Calu3 (cell line): ENCODE measurements at regions of chr20 and their contacts with region 1.

Region 1: DNA sequence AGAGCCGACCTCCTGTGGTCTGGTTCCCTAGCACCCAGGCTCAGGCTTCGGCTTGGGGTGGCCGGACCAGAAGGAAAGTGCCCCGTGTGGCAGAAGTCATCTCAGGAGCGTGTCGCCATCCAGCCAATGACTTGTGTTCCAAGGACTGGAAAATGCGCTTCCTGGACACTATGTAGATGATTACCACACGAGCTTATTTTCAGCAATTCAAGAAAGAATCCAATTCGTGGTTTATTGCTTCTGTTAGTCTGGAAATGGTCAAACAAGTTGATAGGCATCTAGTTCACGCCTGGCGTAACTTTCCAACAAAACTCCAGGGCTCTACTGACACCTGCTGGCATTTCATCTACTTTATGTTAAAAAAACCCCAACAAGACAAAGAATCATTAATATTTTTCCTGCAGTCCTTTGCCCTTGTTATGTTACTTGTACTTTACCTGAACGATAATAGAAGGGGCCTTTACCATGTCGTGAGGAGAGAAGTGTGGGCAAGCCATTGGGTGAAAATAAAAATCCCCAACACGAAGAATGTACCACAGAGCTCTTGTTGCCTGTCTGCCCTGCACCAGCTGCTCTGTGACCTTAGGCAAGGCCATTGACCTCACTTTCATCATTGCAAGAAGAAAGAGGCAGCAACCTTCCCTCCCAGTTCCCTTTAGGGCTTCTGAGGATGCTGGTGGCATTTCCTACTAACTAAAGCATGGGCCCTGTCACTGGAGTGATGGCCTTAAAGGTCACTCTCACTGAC is 154.7 kb upstream of the LAMP5 start:
- DNase-seq: peak; percentile 37
- H3K4me3 Mint-ChIP-seq: no peak overlapping the region
- H3K27ac Mint-ChIP-seq: no peak overlapping the region
- H3K4me1 Mint-ChIP-seq: no peaks in the 10 kb centered on the region
- H3K27me3 Mint-ChIP-seq: no peaks in the 10 kb centered on the region
- CTCF ChIP-seq: peak; percentile 40

Region 2: GRCh38 chr20:8756410-8756809 is 603.3 kb before region 1 on chr20:
- CTCF ChIA-PET with region 1: no interaction called
- intact Hi-C with region 1: loop called (anchors 10 kb)
- DNase-seq: no peak
- H3K4me3 Mint-ChIP-seq: no peak overlapping the region
- H3K27ac Mint-ChIP-seq: no peak overlapping the region
- H3K4me1 Mint-ChIP-seq: no peaks in the 10 kb centered on the region
- H3K27me3 Mint-ChIP-seq: no peaks in the 10 kb centered on the region
- CTCF ChIP-seq: no peak

Region 3: DNA sequence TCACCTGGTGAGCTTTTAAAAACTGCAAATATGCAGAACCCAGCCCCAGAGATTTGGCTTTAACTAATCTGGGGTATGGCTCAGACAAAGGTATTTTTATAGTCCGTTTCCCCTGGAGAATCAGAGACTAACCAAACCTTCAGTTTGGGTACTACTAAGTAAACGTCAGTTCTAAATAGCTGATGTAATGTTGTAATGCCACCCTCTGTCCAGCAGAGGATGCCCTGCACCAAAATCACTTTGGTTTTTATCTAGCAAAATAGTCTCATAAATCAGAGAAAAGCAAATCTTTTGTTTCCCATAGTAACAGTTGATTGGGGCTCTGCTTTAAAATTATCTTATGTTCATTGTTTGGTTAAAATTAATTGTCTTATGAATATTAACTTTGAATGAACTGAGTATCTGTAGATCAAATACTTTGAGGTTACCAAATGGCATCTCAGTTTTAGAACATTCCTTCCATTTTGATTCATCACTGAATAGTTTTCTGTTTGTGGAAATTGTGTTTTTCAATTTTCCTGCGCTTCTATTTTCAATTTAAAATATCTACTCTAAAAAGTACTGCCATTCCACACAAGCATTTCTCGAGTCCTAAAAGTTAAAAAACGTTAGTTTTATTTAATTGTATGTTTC is 569.2 kb before region 1 on chr20:
- CTCF ChIA-PET with region 1: no interaction called
- intact Hi-C with region 1: loop called (anchors 1 kb)
- DNase-seq: peak; percentile 27
- H3K4me3 Mint-ChIP-seq: no peak overlapping the region
- H3K27ac Mint-ChIP-seq: no peak overlapping the region
- H3K4me1 Mint-ChIP-seq: no peaks in the 10 kb centered on the region
- H3K27me3 Mint-ChIP-seq: no peaks in the 10 kb centered on the region
- CTCF ChIP-seq: peak; percentile 71

Region 4: GRCh38 chr20:8853805-8854338 is 505.9 kb before region 1 on chr20:
- CTCF ChIA-PET with region 1: interaction called, 4 read pairs
- intact Hi-C with region 1: loop called (anchors 5 kb)
- DNase-seq: peak; percentile 18
- H3K4me3 Mint-ChIP-seq: no peak overlapping the region
- H3K27ac Mint-ChIP-seq: no peak overlapping the region
- H3K4me1 Mint-ChIP-seq: no peaks in the 10 kb centered on the region
- H3K27me3 Mint-ChIP-seq: no peaks in the 10 kb centered on the region
- CTCF ChIP-seq: peak; percentile 39

Region 5: DNA sequence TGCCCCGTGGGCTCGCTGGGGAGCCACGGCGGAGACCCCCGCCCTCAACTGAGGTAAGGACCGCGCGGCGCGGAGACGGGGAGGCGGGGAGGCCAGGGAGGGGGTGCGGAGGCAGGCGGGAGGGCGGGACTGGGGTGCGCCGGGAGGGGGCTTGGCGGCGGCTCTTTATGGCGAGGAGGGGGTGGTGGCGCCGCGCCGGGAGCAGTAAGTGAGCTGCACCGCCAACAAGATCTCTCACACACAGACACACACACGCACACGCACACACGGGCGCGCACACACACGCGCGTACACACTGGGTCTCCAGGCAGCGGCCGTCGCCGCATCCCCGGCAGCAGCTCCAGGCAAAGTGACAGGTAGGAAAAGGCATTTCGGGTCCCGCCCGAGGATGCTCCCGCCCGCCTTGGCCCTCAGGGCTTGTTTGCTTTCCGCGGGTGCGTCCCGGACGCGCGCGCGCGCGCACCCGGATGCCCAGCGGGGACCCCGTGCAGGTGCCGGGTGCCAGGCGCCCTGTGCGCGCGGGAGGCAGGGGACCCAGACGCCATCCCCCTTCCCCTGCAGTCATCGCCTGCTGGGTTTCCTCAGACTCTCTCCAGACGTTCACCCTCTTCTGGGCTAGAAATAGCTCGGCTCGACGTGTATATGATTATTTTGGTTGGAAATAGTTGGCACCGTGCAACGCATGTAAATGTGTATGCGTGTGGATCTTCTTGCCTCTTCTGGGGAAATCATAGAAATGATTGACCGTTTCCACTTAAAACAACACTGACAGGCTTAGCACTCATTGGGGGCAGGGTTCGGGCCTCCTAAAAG is 290.7 kb before region 1 on chr20 and contains the start of gene PLCB4:
- CTCF ChIA-PET with region 1: interaction called, 4 read pairs
- intact Hi-C with region 1: loop called (anchors 10 kb)
- DNase-seq: peak; percentile 51
- H3K4me3 Mint-ChIP-seq: peak within 1 kb of the TSS; percentile 89
- H3K27ac Mint-ChIP-seq: peak within 1 kb of the TSS; percentile 85
- H3K4me1 Mint-ChIP-seq: peaks cover 25% of the 10 kb centered on the region
- H3K27me3 Mint-ChIP-seq: no peaks in the 10 kb centered on the region
- CTCF ChIP-seq: no peak
- total RNA-seq, gene PLCB4: 9.9 and 12.9 TPM in 2 replicates

Region 6: DNA sequence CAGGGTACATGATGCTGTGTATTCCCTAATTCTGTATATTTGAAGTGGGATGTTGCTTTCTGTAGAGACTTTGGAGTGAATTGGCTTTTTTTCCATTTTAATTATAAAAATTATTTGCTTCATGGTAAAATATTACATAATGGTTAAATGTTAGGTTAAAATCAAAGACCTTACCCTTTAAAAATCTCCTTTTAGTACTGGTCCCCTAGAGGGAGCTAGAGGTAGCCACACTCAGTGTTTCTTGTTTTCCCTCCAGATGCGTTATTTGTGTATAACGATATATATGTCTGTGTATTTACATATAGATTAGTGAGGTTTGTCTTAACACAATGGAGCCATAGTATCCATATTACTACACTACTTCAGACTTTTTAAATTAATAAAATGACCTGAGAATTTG is 144.2 kb before region 1 on chr20:
- CTCF ChIA-PET with region 1: no interaction called
- intact Hi-C with region 1: loop called (anchors 10 kb)
- DNase-seq: no peak
- H3K4me3 Mint-ChIP-seq: no peak overlapping the region
- H3K27ac Mint-ChIP-seq: no peak overlapping the region
- H3K4me1 Mint-ChIP-seq: no peaks in the 10 kb centered on the region
- H3K27me3 Mint-ChIP-seq: no peaks in the 10 kb centered on the region
- CTCF ChIP-seq: no peak

Region 7: DNA sequence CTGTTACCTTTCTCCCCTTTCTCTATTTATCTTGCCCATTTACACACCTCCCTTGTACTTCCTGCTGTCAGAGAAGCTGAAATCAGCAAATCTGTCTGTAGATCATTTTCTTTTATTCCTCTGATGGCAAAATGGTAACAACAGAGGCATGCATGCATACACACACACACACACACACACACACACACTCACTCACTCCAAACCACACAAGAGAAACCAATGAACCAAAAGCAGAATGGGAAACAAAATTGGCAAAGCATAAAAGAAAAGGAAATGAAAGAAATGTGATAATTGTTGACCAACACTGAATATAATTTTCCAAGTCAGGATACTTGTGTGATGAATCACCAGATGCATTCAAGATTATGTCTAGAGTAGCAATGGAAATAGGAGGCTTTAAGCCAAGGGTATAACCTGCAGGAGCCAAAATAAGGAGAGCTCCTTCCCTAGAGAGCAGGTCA is 118.5 kb before region 1 on chr20:
- CTCF ChIA-PET with region 1: no interaction called
- intact Hi-C with region 1: loop called (anchors 10 kb)
- DNase-seq: peak; percentile 41
- H3K4me3 Mint-ChIP-seq: no peak overlapping the region
- H3K27ac Mint-ChIP-seq: peak overlapping the region; percentile 39
- H3K4me1 Mint-ChIP-seq: peaks cover 24% of the 10 kb centered on the region
- H3K27me3 Mint-ChIP-seq: no peaks in the 10 kb centered on the region
- CTCF ChIP-seq: no peak